B cell (primary cell): ENCODE measurements at regions of chr16 and their contacts with region 1.

Region 1: GRCh38 chr16:57984331-57985203 is 13.6 kb upstream of the CNGB1 start:
- DNase-seq: peak; percentile 90
- ATAC-seq: peak; percentile 99
- H3K4me3 ChIP-seq: peak overlapping the region; percentile 49 to 69 (median 63)
- H3K4me3 Mint-ChIP-seq: peak overlapping the region; percentile 93
- H3K27ac ChIP-seq: no peak overlapping the region
- H3K27ac Mint-ChIP-seq: peak overlapping the region; percentile 78
- H3K4me1 ChIP-seq: peaks cover 7 to 16% of the 10 kb centered on the region in 2 donors
- H3K4me1 Mint-ChIP-seq: peaks cover 18% of the 10 kb centered on the region
- H3K27me3 ChIP-seq: peaks cover 0 to 14% (median 6%) of the 10 kb centered on the region in 4 experiments
- H3K27me3 Mint-ChIP-seq: peaks cover 10% of the 10 kb centered on the region
- CTCF ChIP-seq: no peak

Region 2: DNA sequence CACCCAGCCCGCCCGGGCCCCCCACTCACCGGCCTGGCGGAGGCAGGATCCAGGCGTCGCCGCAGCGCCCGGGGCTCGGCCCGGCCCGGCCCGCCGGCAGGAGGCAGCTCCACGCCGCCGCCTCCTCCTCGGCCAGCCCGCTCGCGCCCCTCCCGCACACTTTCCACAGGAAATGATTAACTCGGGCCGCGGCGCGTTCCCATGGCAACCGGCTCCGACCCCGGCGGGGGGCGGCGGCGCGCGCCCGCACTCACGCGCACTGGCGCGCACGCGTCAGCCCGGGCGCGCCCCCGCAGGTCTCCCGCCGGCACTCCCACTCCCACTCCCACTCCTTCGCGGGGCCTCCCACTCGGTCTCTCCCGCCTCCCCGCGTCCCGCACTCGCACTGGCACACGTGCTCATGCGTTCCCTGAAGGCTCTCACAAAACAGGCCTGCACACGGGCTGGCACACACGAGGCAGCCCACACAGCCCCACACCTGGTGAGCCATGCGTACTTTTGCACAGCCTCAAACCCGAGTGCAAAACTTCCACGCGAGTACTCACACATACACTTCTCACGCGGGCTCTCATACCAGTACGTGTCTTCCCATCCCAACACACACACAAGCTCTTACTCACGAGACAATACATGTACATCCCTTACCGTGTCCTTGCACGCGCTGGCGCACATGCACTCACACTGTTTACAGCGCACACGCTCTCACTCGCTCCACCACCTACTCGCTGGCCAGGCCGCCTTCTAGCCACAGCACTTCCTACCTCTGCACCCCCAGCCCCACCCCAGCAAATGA is 182.0 kb before region 1 on chr16 and contains the start of gene KIFC3:
- CTCF ChIA-PET with region 1: no interaction called
- POLR2A ChIA-PET with region 1: interaction called, 14 read pairs
- intact Hi-C with region 1: no loop called
- DNase-seq: peak; percentile 55
- ATAC-seq: peak; percentile 60
- H3K4me3 ChIP-seq: peak within 1 kb of the TSS in 3 of 5 experiments; percentile 27 to 57 (median 30)
- H3K4me3 Mint-ChIP-seq: peak within 1 kb of the TSS; percentile 92
- H3K27ac ChIP-seq: no peak within 1 kb of the TSS
- H3K27ac Mint-ChIP-seq: no peak within 1 kb of the TSS
- H3K4me1 ChIP-seq: peaks cover 16 to 18% of the 10 kb centered on the region in 2 donors
- H3K4me1 Mint-ChIP-seq: peaks cover 22% of the 10 kb centered on the region
- H3K27me3 ChIP-seq: peaks cover 0 to 50% (median 19%) of the 10 kb centered on the region in 4 experiments
- H3K27me3 Mint-ChIP-seq: peaks cover 59% of the 10 kb centered on the region
- CTCF ChIP-seq: no peak
- total RNA-seq, gene KIFC3: 0.67 and 0.78 TPM in 2 replicates